Left cardiac atrium (tissue), 4 donors: ENCODE measurements at regions of chr2 and their contacts with region 1.

Region 1: DNA sequence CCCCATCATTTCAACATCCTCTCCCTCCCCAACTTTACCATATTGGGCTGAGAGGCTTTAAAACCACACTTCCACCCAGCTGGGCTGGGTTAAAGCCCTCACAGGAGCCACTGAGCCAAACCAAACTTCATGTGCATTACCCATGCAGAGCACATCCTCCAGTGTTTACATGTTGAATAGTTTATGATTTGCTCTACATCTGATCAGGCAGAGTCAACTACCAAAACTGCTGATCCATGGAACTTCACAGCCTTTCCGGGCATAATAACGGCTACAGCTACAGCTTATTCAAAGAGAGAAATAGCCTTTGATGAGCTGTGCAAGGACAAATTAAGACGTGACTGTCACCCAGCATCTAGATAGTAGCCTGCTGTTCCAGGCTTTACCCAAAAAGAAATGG is 39.0 kb downstream of the MAIP1 start:
- DNase-seq: no peak
- ATAC-seq: no peak

Region 2: GRCh38 chr2:200042102-200042735 is 47.8 kb after region 1 on chr2:
- intact Hi-C with region 1: no loop called
- DNase-seq: no peak
- ATAC-seq: peak in 1 of 2 donors; percentile 58

Region 3: DNA sequence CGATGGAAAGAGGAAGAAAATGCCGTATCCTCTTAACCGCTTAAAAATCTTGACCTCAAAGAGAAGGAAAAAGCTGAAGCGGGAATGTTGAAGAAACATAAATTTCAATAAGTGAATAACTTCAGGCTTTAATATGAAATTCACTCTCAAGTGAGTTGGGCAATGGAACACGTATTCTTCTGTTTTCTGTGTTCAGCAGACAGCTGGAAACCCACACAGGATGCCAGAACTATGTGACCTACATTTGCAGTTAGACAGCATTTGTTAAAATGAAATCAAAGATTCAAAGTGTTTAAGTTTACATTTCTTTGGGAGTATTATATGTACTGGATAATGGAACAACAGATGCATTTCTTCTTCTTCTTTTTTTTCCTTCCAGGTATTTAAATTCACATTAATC is 231.6 kb after region 1 on chr2:
- intact Hi-C with region 1: loop called in 1 of 2 experiments (anchors 10 kb)
- DNase-seq: no peak
- ATAC-seq: peak; percentile 60 to 66

Region 4: GRCh38 chr2:200845669-200846325 is 851.4 kb after region 1 on chr2:
- intact Hi-C with region 1: no loop called
- DNase-seq: no peak
- ATAC-seq: no peak